Activated naive CD4-positive, alpha-beta T cell treated with anti-CD3 and anti-CD28 coated beads, Interleukin-2, amount 10 ng/mL, durations not matched to agents 7 days and 5 days (primary cell): ENCODE measurements at regions of chr12 and their contacts with region 1.

Region 1: GRCh38 chr12:49945394-49946080 is 5.0 kb upstream of the AQP2 start:
- DNase-seq: peak; percentile 87
- H3K4me3 Mint-ChIP-seq: peak overlapping the region; percentile 74
- H3K27ac Mint-ChIP-seq: peak overlapping the region; percentile 87
- H3K4me1 Mint-ChIP-seq: peaks cover 41% of the 10 kb centered on the region
- H3K27me3 Mint-ChIP-seq: peaks cover 36% of the 10 kb centered on the region

Region 2: GRCh38 chr12:49866859-49867579 is 78.5 kb before region 1 on chr12:
- CTCF ChIA-PET with region 1: interaction called, 16 read pairs
- DNase-seq: peak; percentile 80
- H3K4me3 Mint-ChIP-seq: no peak overlapping the region
- H3K27ac Mint-ChIP-seq: no peak overlapping the region
- H3K4me1 Mint-ChIP-seq: no peaks in the 10 kb centered on the region
- H3K27me3 Mint-ChIP-seq: peaks cover 54% of the 10 kb centered on the region

Region 3: GRCh38 chr12:49930515-49931288 is 14.8 kb before region 1 on chr12:
- CTCF ChIA-PET with region 1: interaction called, 18 read pairs
- DNase-seq: no peak
- H3K4me3 Mint-ChIP-seq: no peak overlapping the region
- H3K27ac Mint-ChIP-seq: no peak overlapping the region
- H3K4me1 Mint-ChIP-seq: no peaks in the 10 kb centered on the region
- H3K27me3 Mint-ChIP-seq: peaks cover 28% of the 10 kb centered on the region

Region 4: GRCh38 chr12:49959570-49960465 is 14.3 kb after region 1 on chr12:
- CTCF ChIA-PET with region 1: interaction called, 12 read pairs
- DNase-seq: no peak
- H3K4me3 Mint-ChIP-seq: no peak overlapping the region
- H3K27ac Mint-ChIP-seq: no peak overlapping the region
- H3K4me1 Mint-ChIP-seq: peaks cover 9% of the 10 kb centered on the region
- H3K27me3 Mint-ChIP-seq: peaks cover 67% of the 10 kb centered on the region

Region 5: DNA sequence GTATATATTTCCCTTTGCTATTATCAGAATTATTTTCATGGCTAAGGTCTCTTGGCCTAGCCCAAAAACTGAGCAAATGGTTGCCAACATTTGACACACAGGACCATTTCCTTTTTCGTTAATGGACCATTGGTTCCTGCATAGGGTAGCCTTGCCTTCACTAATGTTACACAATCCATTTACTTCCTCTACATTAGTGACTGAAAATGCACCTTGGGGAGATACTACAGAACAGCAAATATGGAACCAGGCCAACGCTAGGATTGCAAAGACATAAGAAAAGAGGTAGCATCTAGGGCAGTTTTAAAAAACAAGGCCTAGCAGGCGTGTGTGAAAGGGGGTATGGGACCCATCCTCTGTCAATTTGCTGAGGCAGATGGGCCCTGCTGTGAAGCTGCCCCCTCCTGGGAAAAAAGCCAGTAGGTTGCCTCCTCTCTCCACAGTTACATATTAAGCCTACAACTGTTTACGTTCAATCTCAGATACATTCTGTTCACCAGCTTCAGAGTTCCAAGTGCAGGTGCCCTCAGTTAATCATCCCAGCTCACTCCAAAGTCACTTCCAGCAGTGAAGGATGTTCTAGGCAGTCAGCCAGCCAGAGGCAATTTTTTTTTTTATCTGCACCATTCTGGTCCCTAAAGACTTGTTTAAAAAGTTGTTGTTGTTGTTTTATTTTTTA is 42.2 kb after region 1 on chr12:
- CTCF ChIA-PET with region 1: no interaction called
- DNase-seq: no peak
- H3K4me3 Mint-ChIP-seq: no peak overlapping the region
- H3K27ac Mint-ChIP-seq: no peak overlapping the region
- H3K4me1 Mint-ChIP-seq: no peaks in the 10 kb centered on the region
- H3K27me3 Mint-ChIP-seq: no peaks in the 10 kb centered on the region